Lower leg skin (tissue), 4 donors: ENCODE measurements at regions of chr13 and their contacts with region 1.

Region 1: DNA sequence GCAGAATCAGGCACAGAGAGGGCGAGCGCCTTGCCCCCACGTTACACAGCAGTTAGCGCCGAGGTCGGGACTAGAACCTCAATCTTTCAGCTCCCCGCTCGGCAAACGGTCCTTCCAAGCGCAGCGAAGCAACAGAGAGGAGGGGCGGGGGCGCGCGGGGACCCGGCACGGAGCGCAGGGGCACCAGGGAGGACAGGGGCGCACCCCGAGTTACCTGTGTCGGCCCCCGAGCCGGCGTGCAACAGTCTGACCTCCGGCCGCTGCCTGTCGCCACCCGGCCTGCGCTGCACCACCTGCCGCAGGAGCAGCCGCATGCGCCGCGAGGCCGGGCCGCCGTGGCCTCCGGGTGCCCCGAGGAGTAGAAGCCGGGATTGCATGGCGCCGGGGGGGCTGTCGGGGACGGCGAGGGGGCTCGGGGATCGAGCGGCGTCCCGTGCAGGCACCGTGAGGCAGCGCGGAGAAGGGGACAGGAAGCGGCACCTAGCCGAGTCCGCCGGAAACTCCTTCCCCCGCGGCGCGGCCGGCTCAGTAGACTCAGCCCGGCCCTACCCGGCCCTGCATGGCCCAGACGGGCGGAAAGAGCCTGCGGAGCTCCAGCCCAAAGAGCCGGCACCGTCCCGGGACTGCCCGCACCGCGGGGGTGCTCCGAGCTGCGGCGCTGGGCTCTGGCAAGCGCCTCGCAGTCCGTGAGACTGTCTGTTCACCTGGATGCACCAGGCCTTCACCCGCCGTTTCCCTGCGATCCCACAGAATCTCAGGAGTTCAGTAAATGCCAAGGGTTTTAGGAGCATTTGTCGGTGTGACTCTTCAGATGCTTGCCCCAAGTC is at the start of gene VWA8:
- DNase-seq: peak; percentile 53 to 95
- H3K4me3 ChIP-seq: peak within 1 kb of the TSS; percentile 83
- CTCF ChIP-seq: no peak
- POLR2A ChIP-seq: no peak
- total RNA-seq, gene VWA8: 11.8 to 22.0 (median 15.1) TPM

Region 2: GRCh38 chr13:42039946-42040729 is 79.3 kb after region 1 on chr13:
- intact Hi-C with region 1: loop called (anchors 10 kb)
- DNase-seq: peak; percentile 86 to 98
- H3K4me3 ChIP-seq: peak overlapping the region; percentile 71
- CTCF ChIP-seq: no peak
- POLR2A ChIP-seq: no peak